Right cardiac atrium (tissue), 5 donors: ENCODE measurements at regions of chr20 and their contacts with region 1.

Region 1: GRCh38 chr20:48620519-48621254 is 207.1 kb downstream of the PREX1 start:
- DNase-seq: peak; percentile 88 to 95 (median 95)
- ATAC-seq: peak; percentile 90 to 93
- H3K4me3 ChIP-seq: peak overlapping the region; percentile 26
- H3K27ac ChIP-seq: no peak overlapping the region
- H3K4me1 ChIP-seq: no peaks in the 10 kb centered on the region
- H3K27me3 ChIP-seq: no peaks in the 10 kb centered on the region

Region 2: GRCh38 chr20:47663333-47664067 is 957.2 kb before region 1 on chr20:
- intact Hi-C with region 1: loop called (anchors 2 to 5 kb)
- DNase-seq: peak; percentile 70 to 90 (median 88)
- ATAC-seq: peak; percentile 81 to 86
- H3K4me3 ChIP-seq: no peak overlapping the region
- H3K27ac ChIP-seq: no peak overlapping the region
- H3K4me1 ChIP-seq: no peaks in the 10 kb centered on the region
- H3K27me3 ChIP-seq: no peaks in the 10 kb centered on the region

Region 3: GRCh38 chr20:47785854-47786764 is 834.6 kb before region 1 on chr20:
- intact Hi-C with region 1: loop called in 3 of 4 experiments (anchors 2 to 5 kb)
- DNase-seq: peak; percentile 70 to 84 (median 84)
- ATAC-seq: peak; percentile 81 to 89
- H3K4me3 ChIP-seq: peak overlapping the region; percentile 82
- H3K27ac ChIP-seq: peak overlapping the region; percentile 13
- H3K4me1 ChIP-seq: peaks cover 5% of the 10 kb centered on the region
- H3K27me3 ChIP-seq: no peaks in the 10 kb centered on the region